Activated naive CD4-positive, alpha-beta T cell treated with anti-CD3 and anti-CD28 coated beads for 36 hours (primary cell): ENCODE measurements at regions of chr3 and their contacts with region 1.

Region 1: GRCh38 chr3:191051037-191051436 is 148.0 kb upstream of the OSTN start:
- DNase-seq: no peak
- H3K4me3 Mint-ChIP-seq: no peak overlapping the region
- H3K27ac Mint-ChIP-seq: no peak overlapping the region
- H3K4me1 Mint-ChIP-seq: no peaks in the 10 kb centered on the region
- H3K27me3 Mint-ChIP-seq: no peaks in the 10 kb centered on the region

Region 2: DNA sequence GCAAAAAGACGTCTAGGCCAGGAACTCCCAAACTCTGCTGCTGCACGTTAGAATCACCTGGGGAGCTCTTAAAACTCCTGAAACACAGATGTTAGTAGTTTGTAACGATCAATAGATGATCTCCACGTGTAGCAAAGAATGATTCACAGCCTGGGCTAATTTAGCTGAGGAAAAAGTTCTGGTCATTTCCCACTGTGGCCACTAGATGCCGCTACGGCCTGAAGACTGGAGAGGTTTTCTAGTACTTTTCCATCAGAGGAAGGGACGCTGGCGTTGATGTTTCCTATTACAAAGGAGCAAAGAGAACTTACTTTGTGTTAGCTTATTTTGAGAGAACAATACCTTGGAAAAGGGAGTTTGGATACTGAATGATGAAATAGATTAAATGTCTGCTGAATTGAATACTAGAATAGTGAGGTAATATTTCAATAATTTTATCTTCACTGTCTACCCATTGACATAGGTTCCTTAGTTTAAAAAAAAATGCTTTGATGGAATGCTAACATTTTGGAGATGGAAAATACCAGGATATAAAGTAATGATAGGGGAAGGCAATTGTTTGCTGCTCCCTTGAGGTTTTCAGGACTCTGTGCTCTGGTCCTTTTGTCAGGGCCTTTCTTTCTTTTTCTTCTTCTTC is 1089.4 kb before region 1 on chr3:
- CTCF ChIA-PET with region 1: interaction called, 3 read pairs
- intact Hi-C with region 1: loop called (anchors 2 kb)
- DNase-seq: peak; percentile 87
- H3K4me3 Mint-ChIP-seq: no peak overlapping the region
- H3K27ac Mint-ChIP-seq: no peak overlapping the region
- H3K4me1 Mint-ChIP-seq: peaks cover 5% of the 10 kb centered on the region
- H3K27me3 Mint-ChIP-seq: peaks cover 6% of the 10 kb centered on the region

Region 3: DNA sequence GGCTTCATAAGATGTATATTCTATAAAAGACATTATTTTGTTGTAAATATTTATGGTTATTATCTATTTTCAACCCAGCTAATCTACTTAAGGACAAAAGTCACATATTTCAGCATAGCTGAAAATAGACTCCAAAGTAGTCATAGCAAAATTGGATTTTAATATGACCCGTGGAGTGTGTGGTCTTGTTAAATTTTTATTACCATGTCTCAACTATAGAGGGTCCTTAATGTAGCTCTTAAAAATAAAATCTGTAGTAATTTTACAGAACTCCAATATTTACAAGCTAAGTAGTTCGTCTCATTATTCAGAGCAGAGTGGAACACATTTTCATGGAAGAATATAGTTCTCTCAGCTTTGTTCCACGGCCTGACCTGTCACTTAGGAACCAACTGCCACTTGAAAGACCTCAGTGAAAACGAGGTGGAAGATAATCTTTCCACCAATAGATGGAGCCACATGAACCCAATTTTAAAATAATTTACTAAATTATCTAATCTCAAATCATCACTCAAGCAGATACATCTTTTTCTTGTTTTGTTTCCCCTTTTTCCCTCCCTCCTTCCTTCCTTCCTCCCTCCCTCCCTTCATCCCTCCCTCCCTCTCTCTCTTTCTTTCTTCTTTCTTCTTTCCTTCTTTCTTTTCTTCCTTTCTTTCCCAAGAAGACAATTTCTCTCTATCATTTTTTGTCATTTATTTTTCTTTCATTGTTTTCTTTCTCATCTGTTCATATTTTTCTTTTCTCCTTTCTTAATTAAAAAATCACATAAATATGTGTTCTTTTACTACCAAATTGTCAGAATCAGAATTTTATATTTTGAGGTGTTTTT is 826.0 kb before region 1 on chr3:
- CTCF ChIA-PET with region 1: no interaction called
- intact Hi-C with region 1: loop called (anchors 2 kb)
- DNase-seq: no peak
- H3K4me3 Mint-ChIP-seq: no peak overlapping the region
- H3K27ac Mint-ChIP-seq: no peak overlapping the region
- H3K4me1 Mint-ChIP-seq: no peaks in the 10 kb centered on the region
- H3K27me3 Mint-ChIP-seq: peaks cover 2% of the 10 kb centered on the region

Region 4: DNA sequence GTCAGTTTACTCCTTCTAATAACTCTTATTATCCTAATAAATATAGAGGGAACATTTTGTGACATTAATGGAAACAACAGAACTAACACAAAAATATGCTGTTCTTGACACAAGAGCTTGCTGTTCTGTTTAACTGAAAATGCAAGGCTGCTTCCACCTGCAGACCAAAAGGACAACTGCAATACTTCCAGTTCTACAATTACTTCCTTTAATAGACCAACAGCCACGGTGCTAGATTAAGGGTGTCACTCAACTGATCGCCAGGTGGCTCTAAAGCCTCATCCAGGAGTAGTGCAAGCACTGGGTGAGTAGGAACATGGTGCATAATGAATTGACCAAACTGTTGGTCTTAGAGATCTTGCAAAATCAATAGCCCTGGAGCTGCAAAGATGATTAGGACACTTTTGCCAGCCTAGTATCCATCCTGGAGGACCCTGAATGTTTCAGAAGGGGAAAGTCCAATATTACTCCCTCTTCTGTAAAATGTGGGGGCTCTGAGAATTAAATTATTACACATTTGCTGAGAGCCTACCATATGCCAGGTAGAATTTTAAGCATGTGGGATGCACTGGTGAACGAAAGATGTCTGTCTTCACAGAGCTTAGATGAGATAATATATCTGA is 666.7 kb before region 1 on chr3:
- CTCF ChIA-PET with region 1: no interaction called
- intact Hi-C with region 1: loop called (anchors 2 kb)
- DNase-seq: peak; percentile 48
- H3K4me3 Mint-ChIP-seq: no peak overlapping the region
- H3K27ac Mint-ChIP-seq: no peak overlapping the region
- H3K4me1 Mint-ChIP-seq: peaks cover 8% of the 10 kb centered on the region
- H3K27me3 Mint-ChIP-seq: peaks cover 5% of the 10 kb centered on the region

Region 5: GRCh38 chr3:190811775-190812480 is 239.1 kb before region 1 on chr3:
- CTCF ChIA-PET with region 1: no interaction called
- intact Hi-C with region 1: loop called (anchors 2 kb)
- DNase-seq: peak; percentile 14
- H3K4me3 Mint-ChIP-seq: no peak overlapping the region
- H3K27ac Mint-ChIP-seq: no peak overlapping the region
- H3K4me1 Mint-ChIP-seq: no peaks in the 10 kb centered on the region
- H3K27me3 Mint-ChIP-seq: peaks cover 8% of the 10 kb centered on the region

Region 6: GRCh38 chr3:190883973-190884832 is 166.8 kb before region 1 on chr3:
- CTCF ChIA-PET with region 1: no interaction called
- intact Hi-C with region 1: loop called (anchors 1 kb)
- DNase-seq: peak; percentile 57
- H3K4me3 Mint-ChIP-seq: no peak overlapping the region
- H3K27ac Mint-ChIP-seq: no peak overlapping the region
- H3K4me1 Mint-ChIP-seq: no peaks in the 10 kb centered on the region
- H3K27me3 Mint-ChIP-seq: peaks cover 7% of the 10 kb centered on the region